ENCODE measurements at regions of chr6 and their contacts with region 1.

Region 1: DNA sequence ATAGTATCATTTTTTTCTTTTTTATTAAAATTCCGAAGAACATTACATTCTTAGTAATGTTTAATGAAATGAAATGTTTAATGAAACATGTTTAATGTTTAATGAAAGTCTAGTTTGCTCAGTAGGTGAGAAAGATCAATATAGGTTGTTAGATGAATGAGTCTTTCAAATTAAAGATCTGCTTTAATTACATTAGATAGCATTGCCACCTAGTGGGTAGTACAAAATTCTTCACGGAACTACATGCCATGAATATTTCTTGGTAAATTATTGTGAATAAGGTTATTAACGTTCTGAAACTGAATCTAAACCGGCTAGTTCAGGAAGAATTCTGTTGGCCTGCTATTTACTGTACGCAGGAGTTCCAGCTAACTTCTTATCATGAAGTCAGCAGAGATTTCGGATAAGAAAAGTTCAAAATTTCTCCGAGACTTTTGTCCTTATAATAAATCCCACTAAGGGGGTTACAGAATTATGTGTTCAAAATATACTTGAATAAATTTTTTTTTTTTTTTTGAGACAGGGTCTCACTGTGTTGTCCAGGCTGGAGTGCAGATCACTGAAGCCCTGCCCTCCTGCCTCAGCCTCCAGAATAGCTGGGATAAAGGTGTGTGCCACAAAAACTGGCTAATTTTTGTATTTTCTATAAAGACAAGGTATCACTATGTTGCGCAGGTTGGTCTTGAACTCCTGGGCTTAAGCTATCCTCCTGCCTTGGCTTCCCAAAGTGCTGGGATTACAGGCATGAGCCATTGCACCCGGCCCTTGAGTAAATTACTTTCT is 7.9 kb upstream of the GMNN start:
- DNase-seq: peak in 6 of 9 donors; percentile 9 to 48 (median 41)
- ATAC-seq: peak; percentile 74
- H3K4me3 ChIP-seq: no peak overlapping the region
- H3K4me3 Mint-ChIP-seq: no peak overlapping the region
- H3K27ac ChIP-seq: no peak overlapping the region
- H3K27ac Mint-ChIP-seq: no peak overlapping the region
- H3K4me1 ChIP-seq: no peaks in the 10 kb centered on the region
- H3K4me1 Mint-ChIP-seq: peaks cover 0 to 8% (median 3%) of the 10 kb centered on the region in 7 donors
- H3K27me3 ChIP-seq: no peaks in the 10 kb centered on the region
- H3K27me3 Mint-ChIP-seq: no peaks in the 10 kb centered on the region

Region 2: GRCh38 chr6:24520929-24521546 is 245.8 kb before region 1 on chr6:
- CTCF ChIA-PET with region 1: no interaction called
- POLR2A ChIA-PET with region 1: no interaction called
- intact Hi-C with region 1: loop called in 1 of 2 experiments (anchors 2 kb)
- DNase-seq: peak in 3 of 9 donors; percentile 10 to 26 (median 11)
- ATAC-seq: peak; percentile 75
- H3K4me3 ChIP-seq: no peak overlapping the region
- H3K4me3 Mint-ChIP-seq: no peak overlapping the region
- H3K27ac ChIP-seq: no peak overlapping the region
- H3K27ac Mint-ChIP-seq: peak overlapping the region in 1 of 9 donors; percentile 5
- H3K4me1 ChIP-seq: no peaks in the 10 kb centered on the region
- H3K4me1 Mint-ChIP-seq: peaks cover 0 to 20% (median 4%) of the 10 kb centered on the region in 7 donors
- H3K27me3 ChIP-seq: no peaks in the 10 kb centered on the region
- H3K27me3 Mint-ChIP-seq: no peaks in the 10 kb centered on the region

Region 3: DNA sequence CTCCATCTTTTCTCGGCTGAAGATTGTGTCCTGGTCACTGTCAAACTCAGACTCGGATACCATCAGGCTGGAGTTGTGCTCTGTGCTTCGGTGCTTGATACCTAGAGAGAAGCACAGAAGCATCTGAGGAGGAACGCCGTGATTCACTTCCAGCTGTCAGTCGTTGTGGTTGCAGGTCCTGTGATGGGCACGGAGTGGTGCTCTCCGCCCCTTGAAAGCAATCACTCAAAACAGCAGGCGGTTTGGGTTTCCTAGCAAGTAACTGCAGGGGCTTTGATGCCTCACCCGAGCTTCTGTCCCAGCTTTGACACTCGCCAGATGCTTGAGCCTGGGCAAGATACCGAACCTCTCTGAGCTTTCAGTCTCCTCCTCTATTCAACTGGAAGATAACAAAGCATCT is 219.6 kb before region 1 on chr6:
- CTCF ChIA-PET with region 1: no interaction called
- POLR2A ChIA-PET with region 1: interaction called, 3 read pairs
- intact Hi-C with region 1: loop called in 1 of 2 experiments (anchors 1 kb)
- DNase-seq: peak in 8 of 9 donors; percentile 19 to 52 (median 32)
- ATAC-seq: peak; percentile 62
- H3K4me3 ChIP-seq: no peak overlapping the region
- H3K4me3 Mint-ChIP-seq: peak overlapping the region in 3 of 10 donors; percentile 9 to 21 (median 21)
- H3K27ac ChIP-seq: no peak overlapping the region
- H3K27ac Mint-ChIP-seq: no peak overlapping the region
- H3K4me1 ChIP-seq: peaks cover 0 to 5% of the 10 kb centered on the region in 2 donors
- H3K4me1 Mint-ChIP-seq: peaks cover 0 to 10% (median 8%) of the 10 kb centered on the region in 7 donors
- H3K27me3 ChIP-seq: no peaks in the 10 kb centered on the region
- H3K27me3 Mint-ChIP-seq: peaks cover 0 to 27% (median 9%) of the 10 kb centered on the region in 5 donors

Region 4: DNA sequence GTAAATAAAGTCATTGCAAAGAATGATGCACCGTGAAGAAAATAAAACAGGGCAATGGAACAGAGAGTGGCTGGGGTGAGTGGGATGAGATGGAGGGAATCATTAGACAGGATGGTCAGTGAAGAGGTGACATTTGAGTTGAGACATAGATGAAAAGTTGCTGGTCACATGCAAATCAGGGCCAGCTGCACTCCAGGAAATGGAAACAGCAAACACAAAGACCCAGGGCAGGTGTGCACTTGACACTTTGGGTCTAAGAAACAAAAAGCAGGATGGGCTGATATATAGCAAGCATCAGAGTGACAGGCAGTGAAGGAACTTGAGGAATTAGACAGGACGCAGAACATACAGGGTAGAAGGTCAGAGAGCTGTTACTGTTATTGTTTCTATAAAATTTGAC is 340.3 kb after region 1 on chr6:
- CTCF ChIA-PET with region 1: no interaction called
- POLR2A ChIA-PET with region 1: no interaction called
- intact Hi-C with region 1: no loop called
- DNase-seq: no peak
- ATAC-seq: no peak
- H3K4me3 ChIP-seq: no peak overlapping the region
- H3K4me3 Mint-ChIP-seq: no peak overlapping the region
- H3K27ac ChIP-seq: no peak overlapping the region
- H3K27ac Mint-ChIP-seq: no peak overlapping the region
- H3K4me1 ChIP-seq: no peaks in the 10 kb centered on the region
- H3K4me1 Mint-ChIP-seq: peaks cover 0 to 34% (median 0%) of the 10 kb centered on the region in 7 donors
- H3K27me3 ChIP-seq: no peaks in the 10 kb centered on the region
- H3K27me3 Mint-ChIP-seq: no peaks in the 10 kb centered on the region